ENCODE measurements at regions of chr2 and their contacts with region 1.

Region 1: DNA sequence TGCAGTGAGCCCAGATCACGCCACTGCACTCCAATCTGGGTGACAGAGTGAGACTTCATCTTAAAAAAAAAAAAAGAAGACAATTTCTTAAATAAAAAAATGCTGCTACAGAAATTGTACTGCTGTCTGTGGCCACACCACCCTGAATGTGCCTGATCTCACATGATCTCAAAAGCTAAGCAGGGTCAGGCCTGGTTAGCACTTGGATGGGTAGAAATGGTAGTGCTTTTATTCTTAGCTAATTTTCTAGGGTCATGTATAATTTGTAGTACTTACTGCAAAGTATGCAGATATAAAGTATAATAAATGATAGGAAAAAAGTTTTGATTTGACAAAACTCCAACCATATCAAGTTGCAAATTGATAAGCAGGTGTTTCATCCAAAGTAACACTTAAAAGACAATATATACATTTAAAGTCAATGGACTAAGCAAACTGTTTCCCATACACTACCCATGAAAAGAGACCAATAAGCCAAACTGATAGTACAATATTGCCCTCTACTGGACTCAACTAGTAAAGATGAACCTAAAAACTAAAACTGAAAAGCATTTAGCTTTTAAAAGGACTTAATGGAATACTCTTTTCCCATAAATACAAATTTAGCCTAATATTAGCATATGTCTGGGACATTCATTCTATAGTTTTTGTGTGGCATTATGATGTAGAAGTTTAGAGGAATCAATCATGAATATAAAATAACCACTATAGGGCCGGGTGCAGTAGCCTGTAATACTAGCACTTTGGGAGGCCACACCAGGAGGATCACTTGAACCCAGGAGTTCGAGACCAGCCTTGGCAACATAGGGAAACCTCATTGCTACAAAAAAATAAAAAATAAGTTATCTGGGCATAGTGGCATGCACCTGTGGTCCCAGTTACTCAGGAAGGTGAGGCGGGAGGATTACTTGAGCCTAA is 18.6 kb upstream of the PEX13 start:
- DNase-seq: no peak
- ATAC-seq: peak; percentile 92
- H3K4me3 ChIP-seq: no peak overlapping the region
- H3K27ac ChIP-seq: no peak overlapping the region
- H3K4me1 ChIP-seq: no peaks in the 10 kb centered on the region; the same call in 1 of the 2 replicates
- H3K27me3 ChIP-seq: no peaks in the 10 kb centered on the region
- CTCF ChIP-seq: peak; percentile 48 to 66 (median 59); a peak in 5 of 6 replicates
- EP300 ChIP-seq: no peak
- POLR2A ChIP-seq: no peak
- RAD21 ChIP-seq: peak; percentile 89

Region 2: GRCh38 chr2:60707750-60708371 is 291.0 kb before region 1 on chr2:
- CTCF ChIA-PET with region 1: interaction called, 111 read pairs
- POLR2A ChIA-PET with region 1: interaction called, 3 read pairs
- RAD21 ChIA-PET with region 1: interaction called, 83 read pairs
- SMC1A ChIA-PET with region 1: interaction called, 96 read pairs
- in situ Hi-C with region 1: loop called (anchors 5 kb)
- intact Hi-C with region 1: loop called (anchors 1 kb)
- DNase-seq: peak; percentile 2
- ATAC-seq: peak; percentile 75
- H3K4me3 ChIP-seq: no peak overlapping the region
- H3K27ac ChIP-seq: no peak overlapping the region
- H3K4me1 ChIP-seq: no peaks in the 10 kb centered on the region
- H3K27me3 ChIP-seq: no peaks in the 10 kb centered on the region; a peak in 1 of 4 replicates
- CTCF ChIP-seq: peak; percentile 50 to 70 (median 67)
- EP300 ChIP-seq: no peak
- POLR2A ChIP-seq: no peak
- RAD21 ChIP-seq: peak; percentile 74

Region 3: DNA sequence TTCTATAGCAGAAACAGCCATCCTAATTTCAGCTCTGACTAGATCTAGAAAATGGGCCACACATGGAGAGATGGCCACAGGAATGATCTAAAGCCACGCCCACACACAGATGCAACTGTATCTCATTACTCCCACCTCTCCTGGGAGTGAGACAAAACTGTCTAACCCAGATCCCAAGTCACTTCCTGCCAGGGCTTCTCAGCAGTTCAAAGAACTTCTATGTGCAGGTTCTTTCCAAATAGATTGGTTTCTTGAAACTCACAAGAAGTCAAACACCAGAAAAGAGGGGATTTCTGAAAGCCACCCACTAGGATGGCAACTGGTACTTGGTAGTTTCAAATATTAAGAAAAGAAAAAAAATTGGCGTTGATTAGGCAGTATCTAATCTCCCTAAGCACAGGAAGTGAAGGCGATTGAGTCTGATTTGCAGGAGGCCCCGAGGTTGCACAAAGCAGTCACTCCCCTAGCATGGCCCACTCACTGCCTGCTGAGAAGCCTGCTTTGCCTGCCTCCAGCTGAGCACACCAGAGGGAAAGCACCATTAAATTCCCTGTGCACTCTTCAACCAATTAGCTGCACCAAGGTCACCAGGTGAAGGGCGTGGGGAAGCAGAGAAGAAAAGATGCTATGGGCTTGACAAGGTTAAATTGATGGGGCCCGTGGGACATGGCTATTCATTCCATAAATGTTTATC is 191.8 kb before region 1 on chr2:
- CTCF ChIA-PET with region 1: interaction called, 178 read pairs
- POLR2A ChIA-PET with region 1: no interaction called
- RAD21 ChIA-PET with region 1: interaction called, 56 read pairs
- SMC1A ChIA-PET with region 1: interaction called, 83 read pairs
- in situ Hi-C with region 1: no loop called
- intact Hi-C with region 1: loop called (anchors 2 kb)
- DNase-seq: peak; percentile 75
- ATAC-seq: peak; percentile 90
- H3K4me3 ChIP-seq: no peak overlapping the region
- H3K27ac ChIP-seq: peak overlapping the region; percentile 76
- H3K4me1 ChIP-seq: peaks cover 28% of the 10 kb centered on the region
- H3K27me3 ChIP-seq: no peaks in the 10 kb centered on the region
- CTCF ChIP-seq: no peak
- EP300 ChIP-seq: 0 out of 4 replicates have a peak, but pooled peaks of 1 of the 2 experiments have one; percentile 41
- POLR2A ChIP-seq: 0 out of 2 replicates have a peak, but pooled peaks have one; percentile 6
- RAD21 ChIP-seq: 0 out of 2 replicates have a peak, but pooled peaks have one; percentile 1

Region 4: DNA sequence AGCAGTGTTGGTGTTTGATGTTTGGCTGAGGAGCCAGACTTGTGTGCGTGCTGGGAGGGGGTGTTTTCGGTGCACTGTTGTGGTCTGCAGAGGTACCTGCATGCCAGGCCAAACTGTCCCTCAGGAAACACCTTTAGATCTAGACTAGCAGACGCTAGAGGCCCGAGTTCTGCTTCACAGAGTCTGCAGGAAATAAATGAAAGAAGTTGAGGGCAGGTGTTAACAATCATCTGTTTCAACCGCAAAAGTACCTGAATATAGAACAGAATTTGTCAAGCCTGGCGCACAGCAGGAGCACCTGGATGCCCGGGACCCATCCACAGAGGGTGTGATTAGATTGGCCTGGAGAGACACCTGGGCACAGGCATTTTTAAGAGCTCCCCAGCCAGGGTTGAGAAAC is 158.0 kb before region 1 on chr2:
- CTCF ChIA-PET with region 1: interaction called, 16 read pairs
- POLR2A ChIA-PET with region 1: interaction called, 5 read pairs
- RAD21 ChIA-PET with region 1: interaction called, 4 read pairs
- SMC1A ChIA-PET with region 1: interaction called, 6 read pairs
- in situ Hi-C with region 1: no loop called
- intact Hi-C with region 1: no loop called
- DNase-seq: peak; percentile 86
- ATAC-seq: peak; percentile 63
- H3K4me3 ChIP-seq: peak overlapping the region; percentile 38; the same call in 1 of the 2 replicates
- H3K27ac ChIP-seq: peak overlapping the region; percentile 92
- H3K4me1 ChIP-seq: peaks cover 91% of the 10 kb centered on the region
- H3K27me3 ChIP-seq: no peaks in the 10 kb centered on the region
- CTCF ChIP-seq: no peak
- EP300 ChIP-seq: peak; percentile 30 to 54; a peak in 1 of 4 replicates
- POLR2A ChIP-seq: no peak
- RAD21 ChIP-seq: 0 out of 2 replicates have a peak, but pooled peaks have one; percentile 17

Region 5: DNA sequence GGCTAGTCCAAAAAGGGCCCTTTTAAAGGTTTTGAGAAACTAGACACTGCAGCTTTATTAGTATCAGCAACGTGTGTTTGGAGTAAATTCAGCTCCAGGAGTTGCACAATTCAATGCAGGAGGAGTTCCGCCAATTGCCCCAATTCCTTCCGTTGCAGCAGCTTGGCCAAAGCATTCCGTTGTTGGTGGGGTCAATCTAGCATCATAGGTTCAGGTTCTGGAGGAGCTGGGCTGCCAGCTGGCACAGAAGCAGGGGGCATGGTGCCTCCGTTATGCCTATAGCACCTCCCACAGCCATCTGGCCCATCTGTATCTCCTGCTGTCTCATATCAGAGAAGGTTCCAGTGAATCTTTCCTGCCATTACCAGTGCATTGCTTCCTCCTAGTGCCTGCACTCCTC is 62.1 kb before region 1 on chr2:
- CTCF ChIA-PET with region 1: interaction called, 9 read pairs
- POLR2A ChIA-PET with region 1: no interaction called
- RAD21 ChIA-PET with region 1: interaction called, 7 read pairs
- SMC1A ChIA-PET with region 1: interaction called, 11 read pairs
- in situ Hi-C with region 1: no loop called
- intact Hi-C with region 1: no loop called
- DNase-seq: no peak
- ATAC-seq: no peak
- H3K4me3 ChIP-seq: no peak overlapping the region
- H3K27ac ChIP-seq: no peak overlapping the region
- H3K4me1 ChIP-seq: no peaks in the 10 kb centered on the region
- H3K27me3 ChIP-seq: no peaks in the 10 kb centered on the region
- CTCF ChIP-seq: no peak
- EP300 ChIP-seq: no peak
- POLR2A ChIP-seq: peak; percentile 6; the same call in 1 of the 2 replicates
- RAD21 ChIP-seq: no peak

Region 6: DNA sequence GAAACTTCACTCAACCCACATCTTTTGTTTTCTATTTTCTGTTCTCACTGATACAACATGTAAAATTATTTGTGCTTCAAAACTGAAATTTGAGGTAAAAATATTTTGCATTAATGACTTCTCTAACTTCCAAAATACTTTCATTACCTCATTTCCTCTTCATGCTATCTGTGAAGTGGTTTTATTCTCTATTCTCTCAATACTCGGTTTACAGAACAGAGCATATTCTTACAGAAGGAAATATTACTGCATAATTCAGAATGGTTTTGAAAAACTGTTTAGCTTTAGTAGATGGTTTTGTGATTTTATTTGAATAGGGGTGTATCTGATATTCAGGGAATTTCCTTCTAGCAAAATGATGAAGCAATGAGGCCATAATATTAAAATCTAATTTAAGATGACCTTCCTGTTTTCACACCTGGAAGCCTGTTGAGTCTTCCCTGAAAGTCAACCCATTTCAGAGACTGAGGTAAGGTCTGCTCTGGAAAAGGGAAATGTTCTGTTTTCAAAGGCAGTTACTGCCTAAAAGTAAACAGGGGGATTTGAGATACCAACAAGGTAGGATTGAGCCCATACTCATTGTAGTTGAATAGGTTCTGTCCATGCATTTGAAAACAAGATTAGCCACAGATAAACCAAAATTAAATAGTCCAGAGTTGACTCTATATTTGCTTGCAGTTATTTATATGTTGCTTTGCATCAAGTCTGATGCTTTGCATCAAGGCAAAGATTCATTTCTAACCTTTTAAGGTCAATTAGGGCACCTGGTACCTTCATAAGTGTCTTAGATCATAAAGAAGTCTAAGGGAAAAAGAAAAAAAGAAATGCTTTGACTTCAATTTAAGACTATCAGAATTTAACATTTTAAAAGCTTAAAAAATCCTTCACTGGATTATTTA is 32.1 kb before region 1 on chr2:
- CTCF ChIA-PET with region 1: interaction called, 7 read pairs
- POLR2A ChIA-PET with region 1: interaction called, 5 read pairs
- RAD21 ChIA-PET with region 1: interaction called, 13 read pairs
- SMC1A ChIA-PET with region 1: interaction called, 76 read pairs
- in situ Hi-C with region 1: no loop called
- intact Hi-C with region 1: no loop called
- DNase-seq: peak; percentile 52
- ATAC-seq: peak; percentile 81
- H3K4me3 ChIP-seq: peak overlapping the region; percentile 41; the same call in 1 of the 2 replicates
- H3K27ac ChIP-seq: peak overlapping the region; percentile 92
- H3K4me1 ChIP-seq: peaks cover 35% of the 10 kb centered on the region
- H3K27me3 ChIP-seq: no peaks in the 10 kb centered on the region
- CTCF ChIP-seq: no peak
- EP300 ChIP-seq: peak; percentile 77 to 79; a peak in 3 of 4 replicates
- POLR2A ChIP-seq: no peak
- RAD21 ChIP-seq: no peak

Region 7: GRCh38 chr2:61011678-61012077 is 12.8 kb after region 1 on chr2:
- CTCF ChIA-PET with region 1: interaction called, 15 read pairs
- POLR2A ChIA-PET with region 1: no interaction called
- RAD21 ChIA-PET with region 1: no interaction called
- SMC1A ChIA-PET with region 1: interaction called, 7 read pairs
- in situ Hi-C with region 1: no loop called
- intact Hi-C with region 1: no loop called
- DNase-seq: no peak
- ATAC-seq: no peak
- H3K4me3 ChIP-seq: no peak overlapping the region
- H3K27ac ChIP-seq: no peak overlapping the region
- H3K4me1 ChIP-seq: peaks cover 5% of the 10 kb centered on the region; the same call in 1 of the 2 replicates
- H3K27me3 ChIP-seq: no peaks in the 10 kb centered on the region
- CTCF ChIP-seq: no peak
- EP300 ChIP-seq: no peak
- POLR2A ChIP-seq: no peak
- RAD21 ChIP-seq: no peak

Region 8: DNA sequence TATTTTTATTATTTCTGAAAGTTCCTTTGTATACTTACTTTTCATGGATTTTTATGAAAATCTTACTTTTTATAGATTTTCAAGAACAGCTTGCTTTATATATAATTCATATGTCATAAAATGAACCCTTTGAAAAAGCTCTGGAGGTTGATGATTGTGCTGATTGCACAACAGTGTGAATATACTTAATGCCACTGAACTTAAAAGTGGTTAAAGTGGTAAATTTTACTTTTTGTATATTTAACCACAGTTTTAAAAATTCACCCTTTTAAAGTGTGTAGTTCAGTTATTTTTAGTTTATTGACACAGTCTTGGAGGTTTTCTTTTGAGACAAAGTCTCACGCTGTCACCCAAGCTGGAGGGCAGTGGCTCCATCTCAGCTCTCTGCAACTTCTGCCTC is 75.2 kb after region 1 on chr2:
- CTCF ChIA-PET with region 1: no interaction called
- POLR2A ChIA-PET with region 1: no interaction called
- RAD21 ChIA-PET with region 1: no interaction called
- SMC1A ChIA-PET with region 1: no interaction called
- in situ Hi-C with region 1: no loop called
- intact Hi-C with region 1: no loop called
- DNase-seq: no peak
- ATAC-seq: no peak
- H3K4me3 ChIP-seq: no peak overlapping the region
- H3K27ac ChIP-seq: no peak overlapping the region
- H3K4me1 ChIP-seq: no peaks in the 10 kb centered on the region
- H3K27me3 ChIP-seq: no peaks in the 10 kb centered on the region
- CTCF ChIP-seq: no peak
- EP300 ChIP-seq: no peak
- POLR2A ChIP-seq: no peak
- RAD21 ChIP-seq: no peak

Measured in GM12878 (cell line).